ENCODE measurements at regions of chr5 and their contacts with region 1.

Region 1: DNA sequence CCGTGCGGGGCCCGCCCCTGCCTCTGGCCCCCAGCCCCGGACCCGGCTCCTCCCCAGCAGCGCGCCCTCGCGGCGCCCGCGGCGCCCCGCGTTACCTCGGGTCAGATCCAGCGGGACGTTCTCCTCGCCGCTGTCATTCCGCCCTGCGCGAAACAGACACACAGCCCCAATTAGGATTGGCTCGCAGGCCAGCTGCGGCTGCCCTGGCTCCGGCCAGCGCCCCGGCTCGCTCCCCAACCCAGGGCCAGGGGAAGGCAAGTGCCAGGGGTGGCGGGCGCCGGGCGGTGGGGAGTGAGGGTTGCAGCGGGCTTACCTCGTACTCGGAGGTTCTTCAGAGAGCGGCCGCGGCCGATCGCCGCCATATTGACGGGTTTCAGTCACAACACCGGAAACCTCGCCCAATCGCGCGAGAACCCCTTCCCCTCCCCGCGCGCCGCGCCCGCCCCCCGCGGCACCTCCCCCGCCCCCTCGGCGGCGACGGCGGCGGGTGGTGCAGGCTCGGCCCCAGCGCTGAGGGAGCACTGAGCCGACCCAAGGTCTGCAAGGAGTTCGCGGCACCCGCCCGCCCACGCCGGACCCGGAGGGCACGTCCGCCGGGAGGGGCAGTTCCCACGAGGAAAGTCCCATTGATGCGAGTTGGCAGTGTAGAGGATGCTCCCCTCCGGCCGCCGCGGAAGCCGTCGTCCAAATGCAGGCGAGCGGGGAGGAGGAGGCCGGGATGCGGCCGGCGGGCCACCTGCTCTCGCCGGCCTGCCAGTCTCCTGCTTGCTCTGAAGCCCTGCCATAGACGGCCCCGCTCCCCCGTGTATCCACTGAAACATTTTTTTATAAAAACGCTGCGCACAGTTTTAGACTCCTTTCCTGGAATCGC is at the start of gene RICTOR:
- DNase-seq: peak; percentile 96
- total RNA-seq, gene RICTOR: 75.9 TPM

Region 2: DNA sequence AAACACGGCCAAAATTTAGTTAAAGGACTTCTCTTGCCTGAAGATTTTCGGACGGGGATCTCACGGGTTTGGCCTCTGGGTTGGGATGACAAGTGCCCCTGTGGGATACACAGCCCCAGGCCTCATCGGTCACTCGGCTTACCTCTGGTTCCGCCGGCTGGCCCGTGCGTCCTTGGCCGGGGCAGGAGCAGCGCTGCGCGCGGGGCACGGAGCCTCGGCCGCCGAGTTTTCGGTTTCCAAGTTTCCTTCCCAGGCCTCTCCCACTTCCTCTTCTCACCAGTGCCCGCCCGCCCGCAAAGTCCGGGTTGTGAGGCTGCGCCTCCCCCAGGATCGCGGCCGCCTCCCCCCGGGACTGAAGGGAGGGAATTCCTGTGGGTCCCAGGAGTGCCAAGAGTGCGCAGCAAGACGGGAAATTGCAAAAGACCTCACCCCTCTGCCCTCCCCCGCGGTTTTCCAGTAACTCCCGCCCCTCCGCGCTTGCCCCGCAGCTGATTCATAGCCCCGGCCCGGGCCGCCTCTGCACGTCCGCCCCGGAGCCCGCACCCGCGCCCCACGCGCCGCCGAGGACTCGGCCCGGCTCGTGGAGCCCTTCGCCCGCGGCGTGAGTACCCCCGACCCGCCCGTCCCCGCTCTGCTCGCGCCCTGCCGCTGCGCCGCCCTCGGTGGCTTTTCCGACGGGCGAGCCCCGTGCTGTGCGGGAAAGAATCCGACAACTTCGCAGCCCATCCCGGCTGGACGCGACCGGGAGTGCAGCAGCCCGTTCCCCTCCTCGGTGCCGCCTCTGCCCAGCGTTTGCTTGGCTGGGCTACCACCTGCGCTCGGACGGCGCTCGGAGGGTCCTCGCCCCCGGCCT is 228.5 kb before region 1 on chr5 and contains the start of gene OSMR:
- intact Hi-C with region 1: loop called (anchors 10 kb)
- DNase-seq: peak; percentile 93
- total RNA-seq, gene OSMR: 19.9 TPM

Region 3: GRCh38 chr5:39014544-39014943 is 59.7 kb before region 1 on chr5:
- intact Hi-C with region 1: loop called (anchors 1 kb)
- DNase-seq: no peak